PC-3 (cell line): ENCODE measurements at regions of chr14 and their contacts with region 1.

Region 1: DNA sequence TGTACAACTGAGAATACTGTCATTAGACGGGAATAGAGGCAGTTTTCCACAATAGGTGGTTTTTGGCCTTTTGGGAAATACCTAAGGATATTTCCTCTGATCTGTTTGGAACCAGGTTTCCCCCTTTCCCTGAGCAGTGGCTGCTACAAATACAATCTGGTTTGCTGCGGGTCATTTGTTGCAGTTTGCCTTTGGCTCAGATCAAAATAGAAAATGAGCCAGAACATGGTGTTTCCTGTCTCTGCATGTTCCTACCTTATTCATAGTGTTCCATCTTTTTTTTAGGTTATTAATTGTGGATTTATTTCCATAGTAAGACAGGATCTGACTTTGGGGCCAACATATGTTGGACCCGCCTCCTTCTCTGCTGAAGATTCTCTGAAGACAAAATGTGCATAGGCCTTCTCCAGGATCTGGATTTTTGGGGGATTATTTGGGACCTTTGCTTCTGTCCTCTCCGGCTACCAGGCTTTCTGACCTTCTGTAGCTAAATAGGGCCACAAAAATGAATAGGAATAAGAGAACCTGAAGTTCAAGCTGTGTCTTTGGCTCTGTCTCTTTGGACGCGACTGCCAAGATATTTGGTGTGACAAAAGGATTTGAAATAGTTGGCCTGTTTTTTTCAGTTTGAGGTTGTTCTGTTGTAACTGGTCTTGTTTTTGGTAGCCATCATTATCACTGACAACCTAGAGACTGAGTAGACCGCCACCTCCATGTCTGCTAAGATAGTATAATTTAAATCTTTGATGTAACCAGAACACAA is 146.9 kb downstream of the PRKCH start:
- DNase-seq: no peak
- ATAC-seq: no peak
- H3K4me3 ChIP-seq: no peak overlapping the region
- H3K27ac ChIP-seq: no peak overlapping the region
- H3K4me1 ChIP-seq: peaks cover 54% of the 10 kb centered on the region
- H3K27me3 ChIP-seq: no peaks in the 10 kb centered on the region
- CTCF ChIP-seq: no peak

Region 2: DNA sequence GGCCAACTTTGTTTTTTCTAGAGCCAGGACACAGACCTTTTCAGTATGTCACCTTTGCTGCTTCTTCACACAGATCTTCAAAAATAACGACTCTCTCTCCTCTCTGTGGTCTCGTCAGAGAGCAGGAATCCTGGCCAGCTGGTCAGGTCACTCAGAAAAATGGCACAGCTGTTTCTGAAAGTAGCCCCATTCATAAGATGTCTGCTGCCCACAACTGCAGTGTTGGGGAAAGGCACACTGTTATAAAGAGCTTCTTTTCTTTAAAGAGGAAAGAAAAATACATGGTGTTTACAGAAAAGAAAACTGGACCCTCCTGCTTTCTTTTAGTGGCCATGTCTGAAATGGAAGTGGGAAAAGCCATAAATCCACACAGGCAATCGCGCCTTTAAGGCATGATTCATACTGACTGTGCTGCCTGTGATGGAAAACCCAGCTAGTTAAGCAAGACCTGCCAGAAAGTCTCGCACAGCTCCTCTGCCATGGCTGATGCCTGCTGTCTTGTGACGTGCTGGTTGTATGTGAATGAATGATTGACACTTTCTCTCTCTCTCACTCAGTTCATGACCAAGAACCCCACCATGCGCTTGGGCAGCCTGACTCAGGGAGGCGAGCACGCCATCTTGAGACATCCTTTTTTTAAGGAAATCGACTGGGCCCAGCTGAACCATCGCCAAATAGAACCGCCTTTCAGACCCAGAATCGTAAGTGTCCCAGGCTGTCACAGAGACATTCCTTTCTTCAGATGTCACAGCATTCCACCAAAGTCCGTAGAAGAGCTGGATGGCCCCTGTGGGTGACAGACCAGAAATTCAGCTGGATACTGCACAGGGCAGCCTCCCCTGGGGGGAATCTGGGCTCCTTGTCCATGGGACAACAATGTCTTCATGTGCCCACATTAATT is 79.2 kb after region 1 on chr14:
- CTCF ChIA-PET with region 1: no interaction called
- POLR2A ChIA-PET with region 1: interaction called, 12 read pairs
- intact Hi-C with region 1: no loop called
- DNase-seq: peak; percentile 95
- ATAC-seq: peak; percentile 95
- H3K4me3 ChIP-seq: peak overlapping the region; percentile 2; the same call in 1 of the 2 replicates
- H3K27ac ChIP-seq: peak overlapping the region; percentile 88
- H3K4me1 ChIP-seq: peaks cover 34% of the 10 kb centered on the region
- H3K27me3 ChIP-seq: no peaks in the 10 kb centered on the region
- CTCF ChIP-seq: no peak